Psoas muscle (tissue), 8 donors: ENCODE measurements at regions of chr9 and their contacts with region 1.

Region 1: GRCh38 chr9:99385814-99386279 is 163.8 kb downstream of the SEC61B start:
- DNase-seq: no peak
- ATAC-seq: peak in 2 of 4 donors; percentile 30 to 46
- H3K4me3 ChIP-seq: no peak overlapping the region
- H3K27ac ChIP-seq: no peak overlapping the region
- H3K4me1 ChIP-seq: no peaks in the 10 kb centered on the region
- H3K27me3 ChIP-seq: no peaks in the 10 kb centered on the region
- CTCF ChIP-seq: no peak

Region 2: GRCh38 chr9:99368341-99369323 is 17.2 kb before region 1 on chr9:
- intact Hi-C with region 1: no loop called
- DNase-seq: peak; percentile 67 to 86
- ATAC-seq: peak; percentile 93 to 95 (median 94)
- H3K4me3 ChIP-seq: peak overlapping the region; percentile 64
- H3K27ac ChIP-seq: peak overlapping the region; percentile 92
- H3K4me1 ChIP-seq: peaks cover 36% of the 10 kb centered on the region
- H3K27me3 ChIP-seq: no peaks in the 10 kb centered on the region
- CTCF ChIP-seq: no peak

Region 3: DNA sequence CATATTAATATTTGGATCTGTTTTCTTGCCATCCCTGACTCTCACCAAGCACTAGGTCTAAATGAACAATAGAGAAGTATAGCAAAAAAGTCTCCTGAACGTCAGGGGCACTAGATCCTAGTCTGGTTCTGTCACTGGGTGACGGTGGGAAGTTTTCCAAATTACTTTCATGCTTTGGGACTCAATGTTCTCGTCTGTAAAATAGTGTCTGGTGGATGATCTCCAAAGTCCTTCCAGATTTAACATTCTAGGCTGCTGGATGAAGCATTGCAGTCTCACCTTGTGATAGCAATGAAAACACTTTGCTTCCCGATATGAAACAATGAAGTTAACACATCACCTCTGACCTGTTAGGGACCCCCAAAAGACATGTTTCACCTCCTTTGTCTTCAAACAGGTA is 35.5 kb after region 1 on chr9:
- intact Hi-C with region 1: loop called in 1 of 2 experiments (anchors 5 kb)
- DNase-seq: no peak
- ATAC-seq: peak in 2 of 4 donors; percentile 49 to 69
- H3K4me3 ChIP-seq: no peak overlapping the region
- H3K27ac ChIP-seq: no peak overlapping the region
- H3K4me1 ChIP-seq: peaks cover 6% of the 10 kb centered on the region
- H3K27me3 ChIP-seq: peaks cover 0 to 1% (median 0%) of the 10 kb centered on the region in 3 donors
- CTCF ChIP-seq: no peak